Spleen (tissue), 13 donors: ENCODE measurements at regions of chr13 and their contacts with region 1.

Region 1: DNA sequence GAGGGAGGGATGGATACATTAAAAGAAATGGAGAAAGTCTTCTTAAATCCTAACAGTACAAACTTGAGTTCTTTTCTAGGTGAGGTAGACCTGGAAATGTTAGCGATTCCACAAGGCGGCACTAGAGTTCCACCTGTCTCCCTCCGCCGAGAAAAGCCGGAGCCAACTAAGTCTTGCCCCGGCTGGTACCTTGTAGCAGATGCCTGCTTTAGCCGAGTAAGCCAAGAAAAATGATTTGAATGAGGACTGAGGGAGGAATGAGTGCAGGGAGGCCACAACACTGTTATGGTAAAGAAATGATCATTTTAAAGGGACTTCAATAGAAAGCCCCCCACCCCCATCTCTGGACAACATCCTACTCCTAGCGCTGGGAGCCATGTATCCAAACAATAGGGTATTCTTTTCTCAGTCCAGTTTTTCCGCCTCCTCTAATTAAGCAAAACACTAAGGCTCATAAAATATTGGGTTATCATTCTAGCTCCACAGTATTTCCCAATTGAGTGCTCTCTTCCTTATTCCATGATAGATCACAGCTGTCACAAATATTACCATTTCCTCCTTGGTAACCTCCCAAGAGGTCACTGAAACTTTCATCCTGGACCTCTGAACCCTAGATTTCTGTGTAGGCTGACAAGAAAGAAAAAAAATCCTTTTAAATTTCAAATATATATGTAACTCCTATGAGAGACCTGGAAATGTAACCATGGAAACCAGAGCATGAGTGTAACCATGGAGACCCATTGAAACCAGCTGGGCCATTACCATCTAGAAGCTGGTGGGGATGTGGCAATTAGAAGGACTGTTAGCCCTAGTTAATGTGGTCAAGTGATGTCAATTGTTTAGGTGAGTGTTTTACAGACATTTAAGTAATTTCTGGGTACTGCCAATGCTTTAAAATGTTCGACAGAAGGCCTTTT is 58.3 kb downstream of the GPALPP1 start:
- DNase-seq: peak; percentile 87
- H3K4me3 ChIP-seq: peak overlapping the region in 7 of 8 donors; percentile 19 to 62 (median 27)
- H3K27ac ChIP-seq: no peak overlapping the region
- H3K4me1 ChIP-seq: peaks cover 0 to 27% (median 14%) of the 10 kb centered on the region in 6 donors
- H3K27me3 ChIP-seq: peaks cover 0 to 10% (median 0%) of the 10 kb centered on the region in 7 donors
- CTCF ChIP-seq: peak; percentile 59 to 88 (median 78)
- POLR2A ChIP-seq: no peak

Region 2: DNA sequence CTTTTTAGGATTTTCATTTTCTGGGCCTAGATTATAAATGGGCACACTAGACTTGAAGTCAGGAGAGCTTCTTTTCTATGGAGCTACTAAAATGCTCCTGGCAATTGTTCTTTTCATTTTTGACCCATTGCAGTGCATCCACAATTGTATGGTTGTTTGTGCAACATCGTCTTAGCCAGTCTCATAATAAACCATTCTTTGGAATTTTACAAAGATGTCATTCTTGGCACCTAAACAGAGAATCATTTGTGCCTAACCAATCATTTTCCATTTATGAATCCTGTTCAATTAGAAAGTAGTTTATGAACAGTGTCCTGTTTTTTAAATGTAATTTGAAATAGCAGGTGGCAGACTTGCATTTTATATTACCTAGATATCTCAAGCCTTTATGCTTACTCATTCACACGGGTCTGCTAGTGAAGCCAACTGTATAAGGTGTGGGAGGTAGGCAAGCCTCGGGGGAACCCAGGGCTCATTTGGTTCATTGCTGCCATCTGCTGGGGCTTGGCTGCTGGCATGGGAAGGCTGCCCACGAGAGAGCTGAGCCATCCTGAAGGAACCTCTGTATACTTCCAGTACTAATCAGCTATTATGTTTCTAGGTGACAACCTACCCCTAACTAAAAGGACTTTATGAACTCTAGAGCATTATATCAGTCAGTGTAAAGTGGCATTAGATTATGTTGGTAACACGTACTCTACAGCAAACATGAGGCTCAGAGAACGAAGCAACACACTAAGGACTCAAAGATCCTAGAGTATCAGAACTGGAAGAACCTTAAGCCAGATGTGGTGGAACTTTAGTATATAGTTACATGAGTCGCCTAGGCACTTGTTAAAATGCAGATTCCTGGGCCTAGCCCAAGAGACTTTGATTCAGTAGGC is 233.3 kb after region 1 on chr13:
- intact Hi-C with region 1: loop called (anchors 2 kb)
- DNase-seq: no peak
- H3K4me3 ChIP-seq: no peak overlapping the region
- H3K27ac ChIP-seq: no peak overlapping the region
- H3K4me1 ChIP-seq: peaks cover 0 to 12% (median 3%) of the 10 kb centered on the region in 6 donors
- H3K27me3 ChIP-seq: no peaks in the 10 kb centered on the region
- CTCF ChIP-seq: peak in 10 of 11 experiments; percentile 11 to 74 (median 50)
- POLR2A ChIP-seq: no peak

Region 3: GRCh38 chr13:45310341-45311125 is 262.9 kb after region 1 on chr13:
- intact Hi-C with region 1: loop called (anchors 2 kb)
- DNase-seq: no peak
- H3K4me3 ChIP-seq: peak overlapping the region in 6 of 8 donors; percentile 35 to 70 (median 45)
- H3K27ac ChIP-seq: no peak overlapping the region
- H3K4me1 ChIP-seq: peaks cover 9 to 27% (median 19%) of the 10 kb centered on the region in 6 donors
- H3K27me3 ChIP-seq: peaks cover 0 to 33% (median 0%) of the 10 kb centered on the region in 7 donors
- CTCF ChIP-seq: no peak
- POLR2A ChIP-seq: no peak